ENCODE measurements at regions of chr17 and their contacts with region 1.

Region 1: DNA sequence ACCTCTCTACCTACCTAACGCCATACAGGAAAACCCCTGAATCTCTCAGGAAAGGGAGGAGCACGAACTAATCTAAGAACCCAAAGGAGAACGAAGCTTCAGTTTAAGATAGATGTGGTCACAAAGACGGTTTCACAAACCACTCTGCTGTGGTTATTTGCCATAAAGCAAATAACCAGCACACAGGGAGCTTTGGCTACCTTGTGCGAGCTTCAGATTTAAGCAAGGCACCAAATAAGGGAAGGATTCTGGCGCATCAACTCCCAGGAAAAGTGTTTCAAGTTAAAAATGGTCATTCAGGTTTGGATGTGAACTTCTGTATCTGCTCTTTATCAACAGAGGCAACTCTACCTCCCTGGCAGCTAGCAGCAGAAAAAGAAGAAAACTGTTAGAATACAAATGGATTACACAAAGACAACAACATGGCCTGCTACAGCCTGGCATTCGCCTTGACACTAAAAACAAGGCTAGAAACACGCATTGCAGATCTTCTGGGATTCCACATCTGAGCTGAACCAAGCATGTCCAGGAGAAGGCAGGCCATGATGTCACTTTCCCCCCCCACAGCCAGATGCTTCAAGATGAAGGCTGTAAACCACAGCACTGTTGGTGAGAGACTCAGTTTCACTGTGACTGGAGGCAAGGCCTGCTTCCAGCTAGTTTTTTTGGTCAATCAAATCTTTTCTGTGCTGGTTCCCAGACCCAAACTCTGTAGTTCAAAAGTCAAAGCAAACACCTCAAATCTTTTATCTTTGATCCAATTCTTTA is 43.6 kb downstream of the SMG6 start:
- DNase-seq: peak in 1 of 10 donors; percentile 7
- H3K4me3 ChIP-seq: no peak overlapping the region
- H3K27ac ChIP-seq: peak overlapping the region in 8 of 59 donors; percentile 11 to 59 (median 30)
- H3K27me3 ChIP-seq: no peaks in the 10 kb centered on the region
- CTCF ChIP-seq: no peak

Region 2: GRCh38 chr17:2323629-2324314 is 63.8 kb after region 1 on chr17:
- intact Hi-C with region 1: loop called in 1 of 2 experiments (anchors 10 kb)
- DNase-seq: no peak
- H3K4me3 ChIP-seq: no peak overlapping the region
- H3K27ac ChIP-seq: no peak overlapping the region
- H3K27me3 ChIP-seq: no peaks in the 10 kb centered on the region
- CTCF ChIP-seq: no peak

Measured in dorsolateral prefrontal cortex (tissue), 120 donors.